ENCODE measurements at regions of chr12 and their contacts with region 1.

Region 1: DNA sequence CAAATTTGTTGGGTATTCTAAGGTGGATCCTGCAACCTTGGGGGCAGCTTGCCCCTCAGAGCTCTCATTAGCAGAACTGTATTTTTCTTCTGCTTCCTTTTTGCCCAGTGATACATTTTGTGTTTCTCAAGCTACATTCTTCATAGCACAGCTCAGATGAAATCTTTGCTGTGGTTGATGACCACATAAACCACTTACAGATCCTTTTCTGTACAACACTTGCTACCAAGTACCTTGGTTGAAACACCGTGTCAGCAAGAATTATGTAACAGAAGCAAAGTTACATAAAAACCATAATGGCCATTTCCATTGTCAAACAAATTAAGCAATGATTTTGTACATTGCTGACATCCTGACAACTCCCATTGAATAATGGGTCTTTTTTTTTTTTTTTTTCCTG is 9.7 kb upstream of the PLBD1 start:
- DNase-seq: peak; percentile 67
- H3K4me3 ChIP-seq: no peak overlapping the region
- H3K27ac ChIP-seq: no peak overlapping the region
- H3K4me1 ChIP-seq: no peaks in the 10 kb centered on the region
- H3K27me3 ChIP-seq: no peaks in the 10 kb centered on the region
- CTCF ChIP-seq: no peak

Region 2: DNA sequence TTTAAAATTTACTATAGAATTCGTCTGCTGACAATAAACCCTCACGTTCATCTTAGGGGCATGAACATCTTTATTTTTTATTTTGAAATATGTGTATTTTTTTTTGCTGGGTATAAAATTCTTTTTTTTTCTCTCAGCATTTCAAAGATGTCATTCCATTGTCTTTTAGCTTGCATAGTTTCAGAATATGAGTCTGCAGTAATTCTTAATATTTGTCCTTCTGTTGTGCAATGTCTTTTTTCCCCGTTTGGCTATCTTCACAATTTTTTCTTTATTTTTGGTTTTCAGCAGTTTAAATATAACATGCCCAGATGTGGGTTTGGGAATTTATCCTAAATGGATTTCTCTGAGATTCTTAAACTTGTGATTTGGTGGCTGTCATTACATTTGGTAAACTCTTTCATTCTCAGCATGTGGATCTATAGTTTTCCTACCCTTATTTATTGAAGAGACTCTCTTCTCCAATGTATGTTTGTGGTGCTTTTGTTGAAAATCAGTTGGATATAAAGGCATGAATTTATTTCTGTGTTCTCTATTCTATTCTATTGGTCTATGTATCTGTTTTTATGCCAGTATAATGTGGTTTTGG is 28.2 kb after region 1 on chr12:
- CTCF ChIA-PET with region 1: no interaction called
- dilution Hi-C with region 1: no loop called
- in situ Hi-C with region 1: no loop called
- intact Hi-C with region 1: no loop called
- DNase-seq: no peak
- H3K4me3 ChIP-seq: no peak overlapping the region
- H3K27ac ChIP-seq: no peak overlapping the region
- H3K4me1 ChIP-seq: no peaks in the 10 kb centered on the region
- H3K27me3 ChIP-seq: no peaks in the 10 kb centered on the region
- CTCF ChIP-seq: no peak

Region 3: DNA sequence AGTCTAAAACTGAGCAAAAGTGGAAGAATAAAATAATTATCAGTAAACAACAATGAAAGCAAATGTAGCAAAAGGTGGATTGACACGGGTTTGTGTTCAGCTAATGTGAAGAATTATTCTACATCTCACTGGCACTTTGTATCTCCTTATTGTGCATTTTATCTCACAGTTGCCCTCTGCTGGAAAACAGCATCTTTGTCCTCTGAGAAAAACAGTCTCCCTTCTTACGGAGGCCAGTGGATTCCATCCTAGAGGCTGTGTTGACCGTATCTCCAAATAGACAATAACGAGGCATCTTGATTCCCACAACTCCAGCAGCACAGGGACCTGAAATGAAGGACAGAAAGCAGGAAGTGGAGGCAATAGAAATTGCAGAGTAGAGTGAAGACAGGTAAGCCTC is 41.6 kb after region 1 on chr12:
- CTCF ChIA-PET with region 1: no interaction called
- dilution Hi-C with region 1: loop called (anchors 5 kb)
- in situ Hi-C with region 1: no loop called
- intact Hi-C with region 1: no loop called
- DNase-seq: peak; percentile 24
- H3K4me3 ChIP-seq: no peak overlapping the region
- H3K27ac ChIP-seq: no peak overlapping the region
- H3K4me1 ChIP-seq: no peaks in the 10 kb centered on the region
- H3K27me3 ChIP-seq: no peaks in the 10 kb centered on the region
- CTCF ChIP-seq: peak; percentile 41 to 64